Prostate gland (tissue), 2 donors: ENCODE measurements at regions of chr5 and their contacts with region 1.

Region 1: GRCh38 chr5:164013077-164013670 is 507.8 kb downstream of the MAT2B start:
- DNase-seq: peak; percentile 64
- H3K4me3 ChIP-seq: no peak overlapping the region
- H3K27ac ChIP-seq: no peak overlapping the region
- H3K4me1 ChIP-seq: no peaks in the 10 kb centered on the region
- H3K27me3 ChIP-seq: no peaks in the 10 kb centered on the region
- CTCF ChIP-seq: peak in 3 of 4 experiments; percentile 76 to 82 (median 80)
- POLR2A ChIP-seq: no peak

Region 2: GRCh38 chr5:164475339-164475977 is 462.3 kb after region 1 on chr5:
- intact Hi-C with region 1: loop called (anchors 10 kb)
- DNase-seq: no peak
- H3K4me3 ChIP-seq: no peak overlapping the region
- H3K27ac ChIP-seq: no peak overlapping the region
- H3K4me1 ChIP-seq: no peaks in the 10 kb centered on the region
- H3K27me3 ChIP-seq: no peaks in the 10 kb centered on the region
- CTCF ChIP-seq: peak in 2 of 4 experiments; percentile 25 to 38
- POLR2A ChIP-seq: no peak

Region 3: DNA sequence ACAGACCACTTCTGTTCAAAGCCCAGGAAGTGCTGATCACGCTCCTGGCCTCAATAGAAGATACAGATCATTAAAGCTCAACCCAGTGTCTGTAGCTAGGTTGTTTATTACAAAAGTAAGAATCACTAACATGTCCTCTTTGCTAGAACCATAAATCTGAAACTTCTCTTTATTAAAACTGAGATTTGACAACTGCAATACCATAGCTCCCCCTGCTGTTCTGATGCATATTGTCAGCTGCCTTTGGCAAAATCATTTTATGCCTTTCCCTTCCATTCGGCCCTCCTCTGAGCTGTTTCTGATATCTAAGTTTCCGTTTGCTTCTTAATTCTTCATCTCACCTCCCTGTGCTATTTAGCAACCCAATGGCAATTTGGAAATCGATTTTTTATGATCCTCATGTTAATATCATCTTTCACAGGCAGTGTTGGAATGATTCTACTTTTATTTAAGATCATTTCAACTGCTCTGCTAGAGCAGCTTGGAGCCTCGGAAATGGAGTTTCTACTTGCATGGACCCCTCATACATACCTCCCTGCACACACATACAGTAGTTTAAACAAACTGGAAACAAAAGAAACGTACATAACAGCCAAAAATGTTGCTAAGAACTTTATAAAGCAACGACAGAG is 491.1 kb after region 1 on chr5:
- intact Hi-C with region 1: loop called (anchors 5 kb)
- DNase-seq: peak; percentile 46
- H3K4me3 ChIP-seq: no peak overlapping the region
- H3K27ac ChIP-seq: no peak overlapping the region
- H3K4me1 ChIP-seq: no peaks in the 10 kb centered on the region
- H3K27me3 ChIP-seq: no peaks in the 10 kb centered on the region
- CTCF ChIP-seq: peak; percentile 51 to 82 (median 73)
- POLR2A ChIP-seq: no peak